A673 (cell line): ENCODE measurements at regions of chr14 and their contacts with region 1.

Region 1: DNA sequence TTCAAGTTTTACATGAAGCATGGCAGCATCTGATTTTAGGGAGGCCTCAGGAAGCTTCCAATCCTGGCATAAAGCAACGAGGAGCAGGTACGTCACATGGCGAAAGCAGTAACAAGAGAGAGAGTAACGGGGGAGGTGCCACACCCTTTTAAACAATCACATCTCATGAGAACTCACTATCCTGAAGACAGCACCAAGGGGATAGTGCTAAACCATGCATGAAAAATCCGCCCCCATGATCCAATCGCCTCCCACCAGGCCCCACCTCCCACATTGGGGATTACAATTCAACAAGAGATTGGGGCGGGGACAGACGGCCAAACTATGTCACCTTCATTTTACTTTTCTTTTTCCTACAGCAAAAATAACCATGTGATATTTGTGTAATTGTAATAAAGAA is 7.2 kb upstream of the MAP3K9 start:
- DNase-seq: peak; percentile 51
- H3K4me3 ChIP-seq: no peak overlapping the region
- H3K27ac ChIP-seq: no peak overlapping the region
- H3K4me1 ChIP-seq: peaks cover 15% of the 10 kb centered on the region
- H3K27me3 ChIP-seq: no peaks in the 10 kb centered on the region
- CTCF ChIP-seq: no peak

Region 2: DNA sequence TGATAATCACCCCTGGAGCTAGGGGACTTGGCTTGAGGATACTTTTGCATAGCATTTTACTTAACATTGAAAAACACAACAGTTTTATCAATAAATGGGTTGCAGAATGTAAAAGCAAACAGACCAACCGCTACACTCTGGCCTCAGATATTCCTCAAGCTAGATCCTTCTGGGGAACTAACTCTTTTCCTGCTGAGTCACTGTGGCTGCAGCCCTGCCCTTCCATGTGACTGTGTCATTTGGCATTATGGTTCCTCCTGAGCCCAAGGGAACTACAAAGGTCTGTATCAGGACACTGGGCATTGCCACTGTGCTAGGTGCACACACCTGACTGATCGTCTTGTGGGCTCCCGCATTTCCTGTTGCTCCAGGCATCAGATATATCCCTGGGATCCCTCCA is 118.2 kb before region 1 on chr14:
- CTCF ChIA-PET with region 1: no interaction called
- POLR2A ChIA-PET with region 1: no interaction called
- intact Hi-C with region 1: no loop called
- DNase-seq: no peak
- H3K4me3 ChIP-seq: no peak overlapping the region
- H3K27ac ChIP-seq: no peak overlapping the region
- H3K4me1 ChIP-seq: no peaks in the 10 kb centered on the region
- H3K27me3 ChIP-seq: no peaks in the 10 kb centered on the region
- CTCF ChIP-seq: no peak

Region 3: GRCh38 chr14:70955543-70956480 is 139.3 kb after region 1 on chr14:
- CTCF ChIA-PET with region 1: interaction called, 16 read pairs
- POLR2A ChIA-PET with region 1: no interaction called
- intact Hi-C with region 1: loop called (anchors 5 kb)
- DNase-seq: peak; percentile 60
- H3K4me3 ChIP-seq: no peak overlapping the region
- H3K27ac ChIP-seq: no peak overlapping the region
- H3K4me1 ChIP-seq: peaks cover 14% of the 10 kb centered on the region
- H3K27me3 ChIP-seq: no peaks in the 10 kb centered on the region
- CTCF ChIP-seq: peak; percentile 74